ENCODE measurements at regions of chr16 and their contacts with region 1.

Region 1: GRCh38 chr16:10339777-10340732 is 45.8 kb upstream of the ATF7IP2 start:
- DNase-seq: no peak
- H3K4me3 ChIP-seq: no peak overlapping the region
- H3K27ac ChIP-seq: no peak overlapping the region
- H3K4me1 ChIP-seq: peaks cover 0 to 33% (median 15%) of the 10 kb centered on the region in 4 donors
- H3K27me3 ChIP-seq: no peaks in the 10 kb centered on the region
- CTCF ChIP-seq: no peak
- EP300 ChIP-seq: no peak
- POLR2A ChIP-seq: no peak

Region 2: GRCh38 chr16:9966569-9967157 is 373.4 kb before region 1 on chr16:
- intact Hi-C with region 1: no loop called
- DNase-seq: no peak
- H3K4me3 ChIP-seq: no peak overlapping the region
- H3K27ac ChIP-seq: no peak overlapping the region
- H3K4me1 ChIP-seq: no peaks in the 10 kb centered on the region
- H3K27me3 ChIP-seq: no peaks in the 10 kb centered on the region
- CTCF ChIP-seq: no peak
- EP300 ChIP-seq: no peak
- POLR2A ChIP-seq: no peak

Region 3: DNA sequence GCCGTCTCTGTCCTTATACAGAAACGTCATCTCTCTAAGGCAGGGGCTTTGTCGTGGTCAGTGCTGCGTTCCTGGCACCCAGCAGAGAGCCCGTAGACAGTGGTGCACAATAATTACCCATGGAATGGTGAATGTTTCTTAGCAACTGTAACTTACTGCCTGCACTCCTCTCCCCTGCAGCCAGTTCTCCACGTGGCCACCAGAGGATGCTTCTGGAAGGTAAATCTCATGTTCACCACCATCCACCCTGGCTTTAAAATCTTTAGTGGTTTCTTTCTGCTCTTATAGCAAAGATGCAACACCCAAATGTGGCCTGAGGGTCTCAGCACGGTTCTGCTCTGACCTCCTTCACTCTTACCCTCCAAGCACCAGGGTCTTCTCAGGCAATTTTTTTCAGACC is 308.6 kb before region 1 on chr16:
- intact Hi-C with region 1: no loop called
- DNase-seq: no peak
- H3K4me3 ChIP-seq: no peak overlapping the region
- H3K27ac ChIP-seq: no peak overlapping the region
- H3K4me1 ChIP-seq: no peaks in the 10 kb centered on the region
- H3K27me3 ChIP-seq: no peaks in the 10 kb centered on the region
- CTCF ChIP-seq: peak in 2 of 4 experiments; percentile 26 to 37
- EP300 ChIP-seq: no peak
- POLR2A ChIP-seq: no peak

Region 4: DNA sequence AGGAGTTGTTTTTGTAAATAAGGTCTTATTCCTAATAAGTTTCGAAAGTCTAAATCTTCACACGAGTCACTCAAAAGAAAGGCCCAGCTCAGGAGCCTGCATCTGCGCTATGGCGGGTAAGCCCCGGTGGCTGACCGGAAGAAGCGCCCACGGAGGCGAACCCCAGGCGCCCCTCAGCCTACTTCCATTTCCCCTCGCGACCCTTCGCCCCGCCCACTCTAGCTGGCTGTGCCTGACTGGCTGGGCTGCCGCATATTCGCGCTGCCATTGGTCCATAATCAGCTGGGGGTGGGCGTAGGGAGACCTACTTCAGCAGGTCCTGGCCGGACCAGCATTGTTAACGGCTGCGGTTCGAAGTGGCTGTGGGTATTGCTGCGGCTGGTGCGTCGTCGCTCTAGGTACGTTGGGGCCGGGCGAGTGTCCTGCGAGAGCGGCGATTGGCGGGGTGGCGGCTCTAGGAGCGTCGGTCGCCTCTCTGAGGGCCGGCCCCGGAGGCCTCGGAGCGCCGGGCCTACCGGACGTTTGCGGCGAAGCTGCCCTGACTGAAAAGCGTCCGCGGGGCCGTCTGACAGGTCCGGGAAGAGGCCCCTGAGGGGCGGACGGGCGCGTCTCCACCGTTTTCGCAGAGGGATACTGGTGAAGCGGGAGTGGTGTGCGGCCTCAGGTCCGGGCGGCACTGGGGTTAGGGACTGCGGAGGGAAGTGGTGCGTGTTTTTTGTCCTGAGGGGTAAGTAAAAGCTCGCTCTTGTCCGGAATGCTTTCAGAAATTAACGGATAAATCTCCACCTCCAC is 45.9 kb after region 1 on chr16 and contains the start of gene ATF7IP2:
- intact Hi-C with region 1: loop called (anchors 5 kb)
- DNase-seq: peak; percentile 88
- H3K4me3 ChIP-seq: peak within 1 kb of the TSS; percentile 53 to 67 (median 60)
- H3K27ac ChIP-seq: peak within 1 kb of the TSS; percentile 67 to 81 (median 74)
- H3K4me1 ChIP-seq: peaks cover 0 to 14% (median 5%) of the 10 kb centered on the region in 4 donors
- H3K27me3 ChIP-seq: no peaks in the 10 kb centered on the region
- CTCF ChIP-seq: no peak
- EP300 ChIP-seq: no peak
- POLR2A ChIP-seq: peak; percentile 19 to 34
- total RNA-seq, gene ATF7IP2: 9.3 to 22.0 (median 14.3) TPM

Measured in sigmoid colon (tissue), 7 donors.